Posterior vena cava (tissue), 2 donors: ENCODE measurements at regions of chr16 and their contacts with region 1.

Region 1: DNA sequence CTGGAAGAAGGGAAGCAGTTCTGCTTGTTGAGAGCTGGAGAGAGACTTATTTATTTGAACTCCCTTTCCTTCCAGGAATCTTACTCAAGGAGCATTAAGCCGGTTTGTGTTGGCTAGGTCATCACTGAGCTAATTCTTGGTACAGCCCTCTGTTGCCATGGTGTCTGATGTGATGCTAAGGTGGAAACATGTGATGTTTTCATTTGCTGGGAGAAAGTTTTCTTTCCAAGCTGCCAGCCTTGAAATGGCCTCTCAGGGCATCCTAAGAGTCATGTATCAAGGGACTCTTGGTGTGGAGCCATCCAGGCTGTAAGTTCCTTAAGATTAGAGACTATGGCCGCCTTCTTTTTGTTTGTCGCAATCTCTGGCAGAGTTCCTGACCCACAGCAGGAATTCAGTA is 4.2 kb downstream of the PSKH1 start:
- DNase-seq: no peak

Region 2: GRCh38 chr16:67537270-67537635 is 360.0 kb before region 1 on chr16:
- intact Hi-C with region 1: loop called in 1 of 2 experiments (anchors 5 kb)
- DNase-seq: peak; percentile 93